Esophagus muscularis mucosa (tissue), 4 donors: ENCODE measurements at regions of chr17 and their contacts with region 1.

Region 1: GRCh38 chr17:57849874-57850754 is at the start of gene MRPS23:
- DNase-seq: peak; percentile 99
- H3K4me3 ChIP-seq: peak within 1 kb of the TSS; percentile 81 to 91 (median 89)
- H3K27ac ChIP-seq: peak within 1 kb of the TSS; percentile 83 to 98 (median 93)
- H3K4me1 ChIP-seq: peaks cover 48 to 83% (median 73%) of the 10 kb centered on the region in 4 donors
- H3K27me3 ChIP-seq: no peaks in the 10 kb centered on the region
- CTCF ChIP-seq: peak in 1 of 3 experiments; percentile 28
- EP300 ChIP-seq: no peak
- POLR2A ChIP-seq: peak; percentile 64
- total RNA-seq, gene MRPS23: 11.6 to 22.2 (median 16.9) TPM

Region 2: GRCh38 chr17:57902800-57903759 is 53.0 kb after region 1 on chr17:
- intact Hi-C with region 1: no loop called
- DNase-seq: peak; percentile 93
- H3K4me3 ChIP-seq: no peak overlapping the region
- H3K27ac ChIP-seq: peak overlapping the region; percentile 88 to 100 (median 96)
- H3K4me1 ChIP-seq: peaks cover 86 to 100% (median 97%) of the 10 kb centered on the region in 4 donors
- H3K27me3 ChIP-seq: no peaks in the 10 kb centered on the region
- CTCF ChIP-seq: no peak
- EP300 ChIP-seq: no peak
- POLR2A ChIP-seq: no peak

Region 3: DNA sequence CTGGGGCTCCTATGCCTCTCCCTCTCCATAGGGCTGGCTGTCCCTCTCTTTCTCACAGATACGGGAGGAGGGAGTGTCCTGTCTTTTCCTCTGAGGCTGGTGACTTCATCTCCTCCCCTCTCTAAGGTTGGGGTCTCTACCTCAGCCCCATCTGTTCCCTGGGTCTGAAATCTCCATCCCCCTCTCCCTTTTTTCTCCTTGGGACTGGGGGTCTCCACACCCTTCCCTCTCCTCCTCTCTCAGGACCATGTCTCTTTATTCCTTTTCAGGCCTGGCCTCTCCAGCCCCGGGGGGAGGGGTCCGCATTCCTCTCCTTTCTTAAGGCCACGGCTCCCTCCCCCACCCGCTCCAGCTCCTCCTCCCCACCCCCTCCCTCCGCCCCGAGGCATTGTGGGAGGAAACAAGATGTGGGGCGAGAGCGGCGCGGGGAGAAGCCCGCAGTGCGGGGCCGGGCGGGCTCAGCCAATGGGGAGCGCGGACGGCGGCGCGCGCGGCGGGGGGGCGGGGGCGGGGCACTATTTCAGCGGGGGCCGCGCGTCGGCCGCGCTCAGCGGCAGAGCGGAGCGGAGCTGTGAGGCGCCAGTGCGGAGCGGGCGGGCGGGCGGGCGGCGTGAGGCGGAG is 232.9 kb after region 1 on chr17 and contains the start of gene DYNLL2:
- intact Hi-C with region 1: loop called (anchors 5 kb)
- DNase-seq: peak; percentile 97
- H3K4me3 ChIP-seq: peak within 1 kb of the TSS; percentile 96 to 100 (median 99)
- H3K27ac ChIP-seq: peak within 1 kb of the TSS; percentile 95 to 99 (median 98)
- H3K4me1 ChIP-seq: peaks cover 40 to 47% (median 43%) of the 10 kb centered on the region in 4 donors
- H3K27me3 ChIP-seq: peaks cover 0 to 6% (median 0%) of the 10 kb centered on the region in 4 donors
- CTCF ChIP-seq: no peak
- EP300 ChIP-seq: no peak
- POLR2A ChIP-seq: no peak
- total RNA-seq, gene DYNLL2: 22.2 to 37.0 (median 36.3) TPM